Activated CD8-positive, alpha-beta T cell treated with anti-CD3 and anti-CD28 coated beads for 36 hours (primary cell): ENCODE measurements at regions of chr11 and their contacts with region 1.

Region 1: DNA sequence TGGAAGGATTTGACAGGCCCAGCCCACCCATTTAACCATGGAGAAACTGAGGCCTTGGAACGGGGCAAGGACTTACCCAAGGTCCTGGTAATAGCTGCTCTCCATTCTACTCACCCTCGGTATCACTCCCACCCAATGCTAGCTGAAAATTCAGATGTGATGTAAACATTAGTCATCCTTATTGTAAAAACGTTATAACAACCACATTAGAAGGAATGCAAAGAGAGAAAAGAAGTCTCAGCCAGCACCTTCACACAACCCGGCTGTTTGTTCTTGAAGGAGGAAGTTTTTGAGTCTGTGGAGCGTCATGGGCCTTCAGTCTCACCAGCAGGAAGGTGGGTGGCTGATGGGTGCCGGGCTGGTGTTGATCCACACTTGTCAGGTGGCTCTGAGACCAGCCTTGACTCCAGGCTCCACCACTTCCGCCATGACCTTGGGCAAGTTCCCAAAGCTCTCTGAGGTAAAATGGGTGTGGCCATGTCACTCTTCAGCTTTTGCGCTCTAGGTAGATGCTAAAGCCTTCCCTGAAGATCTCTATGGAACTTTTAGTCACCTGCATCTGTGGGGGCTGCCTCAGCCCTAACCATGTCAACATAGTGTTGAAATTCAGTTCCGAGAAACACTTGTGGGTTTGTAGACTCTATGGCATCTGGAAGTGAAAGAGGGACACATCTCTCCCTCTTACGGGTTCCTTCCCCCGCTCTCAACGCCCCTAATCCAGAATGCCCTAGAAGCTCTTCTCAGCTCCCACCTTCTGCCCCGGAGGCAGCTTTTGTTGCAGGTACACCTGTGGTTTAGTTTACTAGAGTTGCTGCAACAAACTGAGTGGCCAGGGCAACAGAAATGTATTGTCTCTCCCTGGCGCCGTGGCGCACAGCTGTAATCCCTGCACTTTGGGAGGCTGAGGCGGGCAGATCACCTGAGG is 14.8 kb downstream of the CD6 start:
- DNase-seq: peak; percentile 98
- ATAC-seq: peak; percentile 84
- H3K4me3 Mint-ChIP-seq: peak overlapping the region; percentile 64
- H3K27ac Mint-ChIP-seq: peak overlapping the region; percentile 98
- H3K4me1 Mint-ChIP-seq: peaks cover 94% of the 10 kb centered on the region
- H3K27me3 Mint-ChIP-seq: no peaks in the 10 kb centered on the region
- CTCF ChIP-seq: no peak

Region 2: GRCh38 chr11:60913793-60914632 is 72.2 kb before region 1 on chr11 and contains the start of gene TMEM109:
- CTCF ChIA-PET with region 1: no interaction called
- POLR2A ChIA-PET with region 1: interaction called, 11 read pairs
- intact Hi-C with region 1: no loop called
- DNase-seq: peak; percentile 91
- ATAC-seq: peak; percentile 72
- H3K4me3 Mint-ChIP-seq: peak within 1 kb of the TSS; percentile 90
- H3K27ac Mint-ChIP-seq: peak within 1 kb of the TSS; percentile 97
- H3K4me1 Mint-ChIP-seq: peaks cover 71% of the 10 kb centered on the region
- H3K27me3 Mint-ChIP-seq: no peaks in the 10 kb centered on the region
- CTCF ChIP-seq: no peak
- total RNA-seq, gene TMEM109: 93.2 to 101 TPM

Region 3: GRCh38 chr11:61021661-61022212 is 35.5 kb after region 1 on chr11:
- CTCF ChIA-PET with region 1: interaction called, 5 read pairs
- POLR2A ChIA-PET with region 1: interaction called, 23 read pairs
- intact Hi-C with region 1: loop called (anchors 5 kb)
- DNase-seq: peak; percentile 92
- ATAC-seq: peak; percentile 63
- H3K4me3 Mint-ChIP-seq: peak overlapping the region; percentile 64
- H3K27ac Mint-ChIP-seq: peak overlapping the region; percentile 88
- H3K4me1 Mint-ChIP-seq: peaks cover 81% of the 10 kb centered on the region
- H3K27me3 Mint-ChIP-seq: no peaks in the 10 kb centered on the region
- CTCF ChIP-seq: no peak

Region 4: GRCh38 chr11:61041755-61042518 is 55.7 kb after region 1 on chr11:
- CTCF ChIA-PET with region 1: interaction called, 3 read pairs
- POLR2A ChIA-PET with region 1: interaction called, 10 read pairs
- intact Hi-C with region 1: no loop called
- DNase-seq: peak; percentile 90
- ATAC-seq: peak; percentile 97
- H3K4me3 Mint-ChIP-seq: peak overlapping the region; percentile 58
- H3K27ac Mint-ChIP-seq: peak overlapping the region; percentile 93
- H3K4me1 Mint-ChIP-seq: peaks cover 57% of the 10 kb centered on the region
- H3K27me3 Mint-ChIP-seq: no peaks in the 10 kb centered on the region
- CTCF ChIP-seq: no peak

Region 5: DNA sequence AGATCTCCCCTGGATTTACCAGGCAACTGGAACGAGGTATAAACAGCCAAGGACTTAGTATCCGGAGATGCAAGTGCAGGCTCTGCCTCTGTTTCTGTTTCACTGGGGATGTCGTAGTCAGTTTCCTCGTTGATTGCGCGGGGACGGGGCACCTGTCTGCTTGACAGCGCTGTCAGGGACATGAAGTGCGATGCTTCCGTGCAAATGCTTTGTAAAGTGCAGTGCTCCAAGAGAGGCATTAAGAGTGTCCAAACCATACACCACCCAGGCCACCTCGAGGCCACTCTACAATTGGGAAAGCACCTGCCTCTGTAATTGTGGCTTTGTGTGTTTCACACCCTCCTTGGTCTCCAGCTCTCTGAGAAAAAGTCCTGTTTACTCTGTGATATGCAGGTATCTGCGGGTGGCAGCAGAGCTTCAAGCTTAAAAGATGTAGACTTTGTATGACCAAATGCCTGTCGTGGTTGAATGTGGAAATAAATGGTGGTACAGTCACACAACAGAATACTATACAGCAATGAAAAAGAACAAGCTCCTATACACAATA is 97.4 kb after region 1 on chr11:
- CTCF ChIA-PET with region 1: interaction called, 3 read pairs
- POLR2A ChIA-PET with region 1: interaction called, 12 read pairs
- intact Hi-C with region 1: no loop called
- DNase-seq: peak; percentile 83
- ATAC-seq: peak; percentile 70
- H3K4me3 Mint-ChIP-seq: peak overlapping the region; percentile 78
- H3K27ac Mint-ChIP-seq: peak overlapping the region; percentile 88
- H3K4me1 Mint-ChIP-seq: peaks cover 65% of the 10 kb centered on the region
- H3K27me3 Mint-ChIP-seq: no peaks in the 10 kb centered on the region
- CTCF ChIP-seq: no peak